ENCODE measurements at regions of chr6 and their contacts with region 1.

Region 1: DNA sequence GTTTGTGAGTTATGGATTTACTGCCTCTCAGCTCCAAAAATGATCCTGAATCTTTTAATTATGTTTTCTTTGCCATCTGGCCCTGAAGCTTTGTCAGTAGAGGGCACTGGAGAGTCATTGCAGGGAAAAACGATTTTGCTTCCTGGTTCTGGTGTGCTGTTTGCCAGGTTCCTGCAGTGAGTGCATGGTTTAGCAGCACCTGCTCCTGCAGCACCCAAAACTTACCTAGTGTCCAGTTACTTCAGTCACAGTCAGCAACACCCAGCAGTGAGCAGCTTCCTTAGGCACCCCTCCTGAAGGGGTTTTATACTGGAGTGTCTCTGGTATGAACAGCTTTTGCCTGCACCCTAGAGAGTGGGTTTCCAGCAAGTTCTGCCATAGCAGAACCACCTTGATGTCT is 6.0 kb upstream of the TRIM26 start:
- DNase-seq: peak; percentile 69
- ATAC-seq: peak; percentile 78
- H3K4me3 Mint-ChIP-seq: no peak overlapping the region
- H3K27ac Mint-ChIP-seq: no peak overlapping the region
- H3K4me1 Mint-ChIP-seq: peaks cover 16% of the 10 kb centered on the region
- H3K27me3 Mint-ChIP-seq: no peaks in the 10 kb centered on the region

Region 2: DNA sequence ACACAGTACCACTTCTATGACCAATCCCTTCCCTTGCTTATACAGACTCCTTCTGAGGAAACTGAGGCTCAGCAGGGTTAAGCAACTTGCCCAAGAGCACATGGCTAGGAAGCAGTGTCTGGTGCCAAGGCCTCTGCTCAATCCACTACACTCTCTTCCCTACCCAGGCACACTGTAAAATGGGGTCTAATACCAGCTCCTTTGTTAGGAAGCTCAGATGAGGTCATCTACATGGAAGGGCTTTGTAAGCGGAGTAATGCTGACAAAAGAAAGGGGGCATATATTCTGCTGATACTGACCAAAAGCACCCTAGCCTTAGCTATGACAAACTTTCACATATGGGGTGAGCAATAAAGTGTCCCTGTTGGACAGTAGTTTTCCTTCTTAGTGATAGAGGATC is 15.1 kb before region 1 on chr6:
- CTCF ChIA-PET with region 1: interaction called, 11 read pairs
- POLR2A ChIA-PET with region 1: no interaction called
- intact Hi-C with region 1: no loop called
- DNase-seq: no peak
- ATAC-seq: no peak
- H3K4me3 Mint-ChIP-seq: no peak overlapping the region
- H3K27ac Mint-ChIP-seq: peak overlapping the region; percentile 48
- H3K4me1 Mint-ChIP-seq: peaks cover 57% of the 10 kb centered on the region
- H3K27me3 Mint-ChIP-seq: no peaks in the 10 kb centered on the region

Region 3: DNA sequence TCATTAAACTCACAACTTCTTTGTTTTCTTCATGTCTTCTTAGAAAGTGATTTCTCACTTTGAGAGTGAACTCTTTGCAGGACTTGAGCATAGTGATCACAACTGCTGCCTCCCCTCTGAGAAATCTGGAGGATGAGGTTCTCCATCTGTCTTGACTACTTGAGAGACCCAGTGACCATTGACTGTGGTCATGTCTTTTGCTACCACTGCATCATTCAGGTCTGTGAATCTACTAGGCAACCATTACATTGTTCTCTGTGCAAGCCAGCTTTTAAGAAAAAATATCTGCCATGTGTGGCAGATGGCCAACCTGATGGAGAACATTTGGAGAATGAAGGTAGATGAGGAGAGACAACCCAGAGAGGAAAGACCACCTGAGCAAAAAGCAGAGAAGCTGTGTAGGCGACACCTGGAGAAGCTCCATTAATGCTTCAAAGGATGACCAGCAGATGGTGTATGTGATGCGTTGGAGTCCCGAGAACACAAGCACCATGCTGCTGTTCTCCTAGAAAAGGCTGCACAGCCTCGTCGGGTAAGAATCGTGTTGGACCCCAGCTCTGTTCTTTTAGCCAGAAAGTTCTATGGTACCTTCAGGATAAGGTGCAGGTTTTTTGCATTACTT is 19.0 kb after region 1 on chr6:
- CTCF ChIA-PET with region 1: interaction called, 15 read pairs
- POLR2A ChIA-PET with region 1: no interaction called
- intact Hi-C with region 1: no loop called
- DNase-seq: peak; percentile 45
- ATAC-seq: peak; percentile 53
- H3K4me3 Mint-ChIP-seq: no peak overlapping the region
- H3K27ac Mint-ChIP-seq: no peak overlapping the region
- H3K4me1 Mint-ChIP-seq: no peaks in the 10 kb centered on the region
- H3K27me3 Mint-ChIP-seq: peaks cover 31% of the 10 kb centered on the region

Region 4: DNA sequence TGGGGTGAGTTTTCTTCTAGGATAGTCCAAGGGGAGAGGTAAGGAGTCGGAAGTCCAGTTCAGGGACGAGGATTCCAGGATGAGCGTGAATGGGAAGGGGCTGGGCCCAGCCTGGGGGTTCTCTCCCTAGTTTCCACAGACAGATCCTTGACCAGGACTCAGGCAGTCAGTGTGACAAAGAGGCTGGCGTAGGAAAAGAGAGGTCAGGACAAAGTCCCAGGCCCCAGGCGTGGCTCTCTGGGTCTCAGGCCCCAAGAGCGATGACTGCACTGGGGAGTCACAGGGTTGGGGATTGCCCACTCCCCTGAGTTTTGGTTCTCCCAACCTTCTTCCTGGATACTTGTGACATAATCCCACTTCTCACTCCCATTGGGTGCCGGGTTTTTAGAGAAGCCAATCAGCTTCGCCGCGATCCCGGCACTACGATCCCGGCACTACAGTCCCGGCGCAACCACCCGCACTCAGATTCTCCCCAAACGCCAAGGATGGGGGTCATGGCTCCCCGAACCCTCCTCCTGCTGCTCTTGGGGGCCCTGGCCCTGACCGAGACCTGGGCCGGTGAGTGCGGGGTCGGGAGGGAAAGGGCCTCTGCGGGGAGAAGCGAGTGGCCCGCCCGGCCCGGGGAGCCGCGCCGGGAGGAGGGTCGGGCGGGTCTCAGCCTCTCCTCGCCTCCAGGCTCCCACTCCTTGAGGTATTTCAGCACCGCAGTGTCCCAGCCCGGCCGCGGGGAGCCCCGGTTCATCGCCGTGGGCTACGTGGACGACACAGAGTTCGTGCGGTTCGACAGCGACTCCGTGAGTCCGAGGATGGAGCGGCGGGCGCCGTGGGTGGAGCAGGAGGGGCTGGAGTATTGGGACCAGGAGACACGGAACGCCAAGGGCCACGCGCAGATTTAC is 40.1 kb after region 1 on chr6:
- CTCF ChIA-PET with region 1: interaction called, 4 read pairs
- POLR2A ChIA-PET with region 1: interaction called, 4 read pairs
- intact Hi-C with region 1: loop called (anchors 2 kb)
- DNase-seq: peak; percentile 80
- ATAC-seq: peak; percentile 92
- H3K4me3 Mint-ChIP-seq: peak overlapping the region; percentile 82
- H3K27ac Mint-ChIP-seq: peak overlapping the region; percentile 75
- H3K4me1 Mint-ChIP-seq: peaks cover 17% of the 10 kb centered on the region
- H3K27me3 Mint-ChIP-seq: no peaks in the 10 kb centered on the region

Region 5: GRCh38 chr6:30515932-30516753 is 296.9 kb after region 1 on chr6:
- CTCF ChIA-PET with region 1: no interaction called
- POLR2A ChIA-PET with region 1: no interaction called
- intact Hi-C with region 1: no loop called
- DNase-seq: peak; percentile 96
- ATAC-seq: peak; percentile 87
- H3K4me3 Mint-ChIP-seq: peak overlapping the region; percentile 74
- H3K27ac Mint-ChIP-seq: peak overlapping the region; percentile 98
- H3K4me1 Mint-ChIP-seq: peaks cover 69% of the 10 kb centered on the region
- H3K27me3 Mint-ChIP-seq: no peaks in the 10 kb centered on the region

Region 6: GRCh38 chr6:31665501-31666336 is 1446.5 kb after region 1 on chr6 and contains the start of gene CSNK2B:
- CTCF ChIA-PET with region 1: no interaction called
- POLR2A ChIA-PET with region 1: no interaction called
- intact Hi-C with region 1: no loop called
- DNase-seq: peak; percentile 99
- ATAC-seq: peak; percentile 89
- H3K4me3 Mint-ChIP-seq: peak within 1 kb of the TSS; percentile 99
- H3K27ac Mint-ChIP-seq: peak within 1 kb of the TSS; percentile 99
- H3K4me1 Mint-ChIP-seq: peaks cover 66% of the 10 kb centered on the region
- H3K27me3 Mint-ChIP-seq: no peaks in the 10 kb centered on the region
- total RNA-seq, gene CSNK2B: 239 to 346 TPM

Measured in activated CD4-positive, alpha-beta T cell treated with anti-CD3 and anti-CD28 coated beads for 36 hours (primary cell).